Activated CD4-positive, alpha-beta memory T cell treated with anti-CD3 and anti-CD28 coated beads, Interleukin-2, amount 10 ng/mL, durations not matched to agents 7 days and 5 days (primary cell): ENCODE measurements at regions of chr5 and their contacts with region 1.

Region 1: GRCh38 chr5:177390363-177391300 is 6.4 kb downstream of the SLC34A1 start:
- DNase-seq: peak; percentile 89
- H3K4me3 Mint-ChIP-seq: peak overlapping the region; percentile 52
- H3K27ac Mint-ChIP-seq: peak overlapping the region; percentile 94
- H3K4me1 Mint-ChIP-seq: peaks cover 41% of the 10 kb centered on the region
- H3K27me3 Mint-ChIP-seq: no peaks in the 10 kb centered on the region

Region 2: GRCh38 chr5:177317959-177318377 is 72.7 kb before region 1 on chr5:
- CTCF ChIA-PET with region 1: interaction called, 49 read pairs
- POLR2A ChIA-PET with region 1: interaction called, 17 read pairs
- DNase-seq: peak; percentile 81
- H3K4me3 Mint-ChIP-seq: no peak overlapping the region
- H3K27ac Mint-ChIP-seq: no peak overlapping the region
- H3K4me1 Mint-ChIP-seq: peaks cover 53% of the 10 kb centered on the region
- H3K27me3 Mint-ChIP-seq: no peaks in the 10 kb centered on the region

Region 3: GRCh38 chr5:177370488-177371119 is 20.0 kb before region 1 on chr5:
- CTCF ChIA-PET with region 1: interaction called, 94 read pairs
- POLR2A ChIA-PET with region 1: interaction called, 34 read pairs
- DNase-seq: peak; percentile 79
- H3K4me3 Mint-ChIP-seq: peak overlapping the region; percentile 72
- H3K27ac Mint-ChIP-seq: peak overlapping the region; percentile 56
- H3K4me1 Mint-ChIP-seq: peaks cover 70% of the 10 kb centered on the region
- H3K27me3 Mint-ChIP-seq: no peaks in the 10 kb centered on the region

Region 4: GRCh38 chr5:177425801-177426565 is 35.4 kb after region 1 on chr5:
- CTCF ChIA-PET with region 1: interaction called, 28 read pairs
- POLR2A ChIA-PET with region 1: interaction called, 32 read pairs
- DNase-seq: peak; percentile 100
- H3K4me3 Mint-ChIP-seq: peak overlapping the region; percentile 95
- H3K27ac Mint-ChIP-seq: peak overlapping the region; percentile 98
- H3K4me1 Mint-ChIP-seq: peaks cover 44% of the 10 kb centered on the region
- H3K27me3 Mint-ChIP-seq: no peaks in the 10 kb centered on the region

Region 5: GRCh38 chr5:177454397-177455035 is 63.9 kb after region 1 on chr5:
- CTCF ChIA-PET with region 1: interaction called, 188 read pairs
- POLR2A ChIA-PET with region 1: interaction called, 82 read pairs
- DNase-seq: peak; percentile 94
- H3K4me3 Mint-ChIP-seq: peak overlapping the region; percentile 79
- H3K27ac Mint-ChIP-seq: no peak overlapping the region
- H3K4me1 Mint-ChIP-seq: peaks cover 27% of the 10 kb centered on the region
- H3K27me3 Mint-ChIP-seq: peaks cover 17% of the 10 kb centered on the region